Heart right ventricle (tissue), 16 donors: ENCODE measurements at regions of chr20 and their contacts with region 1.

Region 1: GRCh38 chr20:44609511-44610312 is 27.3 kb downstream of the PKIG start:
- DNase-seq: peak; percentile 91 to 92
- ATAC-seq: peak; percentile 87 to 94 (median 93)
- H3K4me3 ChIP-seq: peak overlapping the region in 7 of 10 donors; percentile 25 to 47 (median 32)
- H3K27ac ChIP-seq: peak overlapping the region; percentile 83 to 92 (median 87)
- H3K4me1 ChIP-seq: peaks cover 18 to 77% (median 55%) of the 10 kb centered on the region in 9 donors
- H3K27me3 ChIP-seq: no peaks in the 10 kb centered on the region
- CTCF ChIP-seq: peak; percentile 95 to 99 (median 97)

Region 2: GRCh38 chr20:44217342-44218092 is 392.2 kb before region 1 on chr20:
- intact Hi-C with region 1: loop called in 7 of 10 experiments (anchors 5 to 10 kb)
- DNase-seq: peak; percentile 52 to 69
- ATAC-seq: peak; percentile 66 to 84 (median 78)
- H3K4me3 ChIP-seq: peak overlapping the region in 8 of 10 donors; percentile 2 to 43 (median 27)
- H3K27ac ChIP-seq: peak overlapping the region in 8 of 10 donors; percentile 1 to 72 (median 48)
- H3K4me1 ChIP-seq: peaks cover 0 to 35% (median 18%) of the 10 kb centered on the region in 9 donors
- H3K27me3 ChIP-seq: no peaks in the 10 kb centered on the region
- CTCF ChIP-seq: peak; percentile 63 to 95 (median 84)

Region 3: GRCh38 chr20:44279228-44279627 is 330.5 kb before region 1 on chr20:
- intact Hi-C with region 1: no loop called
- DNase-seq: no peak
- ATAC-seq: no peak
- H3K4me3 ChIP-seq: no peak overlapping the region
- H3K27ac ChIP-seq: no peak overlapping the region
- H3K4me1 ChIP-seq: peaks cover 0 to 12% (median 3%) of the 10 kb centered on the region in 9 donors
- H3K27me3 ChIP-seq: no peaks in the 10 kb centered on the region
- CTCF ChIP-seq: no peak

Region 4: DNA sequence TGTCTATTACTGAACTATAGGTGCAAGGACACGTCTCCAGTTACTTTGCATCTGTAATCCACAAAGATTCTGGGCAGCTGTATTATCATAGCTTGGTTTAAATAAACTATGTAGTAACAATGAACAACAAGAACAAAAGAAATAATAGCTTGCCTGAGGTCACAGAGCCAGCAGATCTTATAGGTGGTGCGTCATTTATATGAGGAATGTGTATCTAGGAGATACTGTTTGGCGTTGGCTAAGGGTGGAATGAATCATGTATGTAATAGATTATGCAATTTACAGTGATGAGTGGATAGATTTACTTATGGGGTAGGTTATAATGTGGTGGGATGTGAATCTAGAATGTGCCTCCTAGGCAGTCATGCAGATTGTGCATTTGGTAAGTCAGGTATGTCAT is 211.4 kb before region 1 on chr20:
- intact Hi-C with region 1: loop called in 2 of 10 experiments (anchors 5 to 10 kb)
- DNase-seq: no peak
- ATAC-seq: no peak
- H3K4me3 ChIP-seq: no peak overlapping the region
- H3K27ac ChIP-seq: no peak overlapping the region
- H3K4me1 ChIP-seq: no peaks in the 10 kb centered on the region
- H3K27me3 ChIP-seq: peaks cover 0 to 22% (median 10%) of the 10 kb centered on the region in 7 donors
- CTCF ChIP-seq: no peak

Region 5: GRCh38 chr20:44532259-44532980 is 77.3 kb before region 1 on chr20:
- intact Hi-C with region 1: loop called in 9 of 10 experiments (anchors 2 to 5 kb)
- DNase-seq: peak; percentile 32 to 35
- ATAC-seq: peak in 5 of 8 donors; percentile 6 to 52 (median 42)
- H3K4me3 ChIP-seq: peak overlapping the region; percentile 63 to 96 (median 82)
- H3K27ac ChIP-seq: peak overlapping the region; percentile 60 to 85 (median 80)
- H3K4me1 ChIP-seq: peaks cover 3 to 47% (median 21%) of the 10 kb centered on the region in 9 donors
- H3K27me3 ChIP-seq: peaks cover 0 to 10% (median 0%) of the 10 kb centered on the region in 7 donors
- CTCF ChIP-seq: no peak

Region 6: GRCh38 chr20:44576297-44576696 is 33.4 kb before region 1 on chr20:
- intact Hi-C with region 1: loop called in 7 of 10 experiments (anchors 1 to 5 kb)
- DNase-seq: peak in 1 of 2 donors; percentile 52
- ATAC-seq: peak in 5 of 8 donors; percentile 11 to 47 (median 39)
- H3K4me3 ChIP-seq: no peak overlapping the region
- H3K27ac ChIP-seq: peak overlapping the region; percentile 43 to 98 (median 64)
- H3K4me1 ChIP-seq: peaks cover 10 to 90% (median 67%) of the 10 kb centered on the region in 9 donors
- H3K27me3 ChIP-seq: no peaks in the 10 kb centered on the region
- CTCF ChIP-seq: peak; percentile 13 to 71 (median 53)

Region 7: DNA sequence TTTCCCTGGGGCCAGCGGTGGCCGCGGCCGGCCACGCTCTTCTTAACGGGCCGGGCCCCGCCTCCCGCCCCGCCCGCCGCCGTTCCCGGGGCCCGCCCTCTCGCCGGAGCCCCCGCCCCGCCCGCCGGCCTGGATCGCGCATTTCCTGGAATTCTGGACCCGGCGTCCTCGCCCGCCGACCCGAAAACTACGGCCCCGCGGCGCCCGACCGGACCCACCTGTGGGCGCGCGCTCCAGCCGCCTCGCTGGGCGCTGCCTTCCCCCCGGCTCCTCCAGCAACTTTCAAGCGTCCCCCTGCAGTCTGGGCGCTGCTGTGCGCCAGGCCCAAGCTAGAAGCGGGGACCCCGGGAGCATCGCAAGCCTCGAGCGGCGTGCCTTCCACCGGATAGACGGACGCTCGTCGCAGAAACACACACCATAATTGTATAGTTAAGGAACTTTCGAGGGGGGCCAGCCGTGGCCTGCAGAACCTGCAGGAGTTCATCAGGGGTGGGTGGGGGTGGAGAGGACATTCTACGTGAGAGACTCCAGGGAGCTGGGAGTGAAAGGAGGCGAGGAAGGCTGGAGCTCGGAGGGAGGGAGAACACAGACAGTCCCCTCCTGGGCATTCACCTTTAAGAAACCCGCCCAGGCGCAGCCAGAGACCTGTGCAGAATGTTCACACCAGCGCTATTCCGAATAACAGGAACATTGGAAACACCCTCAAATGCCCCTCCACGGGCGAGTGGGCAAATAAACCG is 42.1 kb after region 1 on chr20 and contains the start of gene ADA:
- intact Hi-C with region 1: loop called in 1 of 10 experiments (anchors 2 kb)
- DNase-seq: peak; percentile 77 to 79
- ATAC-seq: peak; percentile 64 to 94 (median 84)
- H3K4me3 ChIP-seq: peak within 1 kb of the TSS; percentile 59 to 91 (median 83)
- H3K27ac ChIP-seq: peak within 1 kb of the TSS; percentile 77 to 94 (median 86)
- H3K4me1 ChIP-seq: peaks cover 9 to 53% (median 37%) of the 10 kb centered on the region in 9 donors
- H3K27me3 ChIP-seq: no peaks in the 10 kb centered on the region
- CTCF ChIP-seq: peak in 1 of 9 donors; percentile 7
- total RNA-seq, gene ADA: 1.6 to 18.3 (median 3.8) TPM

Region 8: GRCh38 chr20:44733341-44734069 is 123.8 kb after region 1 on chr20:
- intact Hi-C with region 1: loop called in 1 of 10 experiments (anchors 10 kb)
- DNase-seq: peak; percentile 66 to 69
- ATAC-seq: peak; percentile 21 to 65 (median 50)
- H3K4me3 ChIP-seq: no peak overlapping the region
- H3K27ac ChIP-seq: no peak overlapping the region
- H3K4me1 ChIP-seq: peaks cover 3 to 35% (median 22%) of the 10 kb centered on the region in 9 donors
- H3K27me3 ChIP-seq: no peaks in the 10 kb centered on the region
- CTCF ChIP-seq: peak; percentile 85 to 96 (median 94)